Endothelial cell of umbilical vein (primary cell): ENCODE measurements at regions of chr5 and their contacts with region 1.

Region 1: DNA sequence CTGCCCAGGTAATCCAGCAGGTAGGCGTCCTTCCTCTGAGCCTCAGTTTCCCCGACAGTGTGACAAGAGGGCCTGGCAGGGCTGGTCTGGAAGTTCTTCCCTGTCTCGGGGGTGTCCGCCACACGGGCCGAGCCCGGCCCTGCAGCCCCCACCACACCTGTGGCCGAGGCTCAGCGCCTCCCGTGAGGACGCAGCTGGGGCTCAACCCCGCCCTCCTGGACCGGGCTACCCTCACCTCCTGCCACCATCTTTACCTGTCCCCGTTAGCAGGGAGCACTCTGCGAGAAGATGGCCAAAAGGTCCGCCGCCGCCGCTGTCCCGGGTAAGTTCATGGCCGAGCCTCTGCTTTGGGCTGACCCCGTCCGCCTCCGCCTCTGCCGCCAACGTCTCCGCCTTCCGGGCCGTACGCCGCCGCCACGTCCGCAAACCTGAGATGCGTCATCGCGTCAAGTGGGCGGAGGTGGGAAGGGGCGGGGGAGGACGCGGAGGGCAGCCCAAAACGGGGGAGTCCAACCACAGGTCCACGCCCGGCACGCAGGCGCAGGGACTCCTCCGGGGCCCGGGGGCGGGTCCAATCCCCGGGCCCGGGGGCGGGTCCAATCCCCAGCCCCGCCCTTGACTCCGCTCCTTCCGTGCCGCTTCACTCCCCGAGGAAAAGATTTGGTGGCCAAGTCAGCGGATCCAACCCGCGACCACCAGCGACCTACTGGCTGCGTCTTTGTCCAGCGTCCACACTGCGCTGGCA is at the start of gene LYSMD3:
- DNase-seq: peak; percentile 98
- H3K4me3 ChIP-seq: peak within 1 kb of the TSS; percentile 69 to 94 (median 88)
- H3K27ac ChIP-seq: peak within 1 kb of the TSS; percentile 88
- H3K4me1 ChIP-seq: peaks cover 16% of the 10 kb centered on the region
- H3K27me3 ChIP-seq: peaks cover 8 to 29% of the 10 kb centered on the region in 2 experiments
- CTCF ChIP-seq: no peak
- POLR2A ChIP-seq: peak; percentile 88
- total RNA-seq, gene LYSMD3: 21.3 and 22.7 TPM in 2 replicates

Region 2: DNA sequence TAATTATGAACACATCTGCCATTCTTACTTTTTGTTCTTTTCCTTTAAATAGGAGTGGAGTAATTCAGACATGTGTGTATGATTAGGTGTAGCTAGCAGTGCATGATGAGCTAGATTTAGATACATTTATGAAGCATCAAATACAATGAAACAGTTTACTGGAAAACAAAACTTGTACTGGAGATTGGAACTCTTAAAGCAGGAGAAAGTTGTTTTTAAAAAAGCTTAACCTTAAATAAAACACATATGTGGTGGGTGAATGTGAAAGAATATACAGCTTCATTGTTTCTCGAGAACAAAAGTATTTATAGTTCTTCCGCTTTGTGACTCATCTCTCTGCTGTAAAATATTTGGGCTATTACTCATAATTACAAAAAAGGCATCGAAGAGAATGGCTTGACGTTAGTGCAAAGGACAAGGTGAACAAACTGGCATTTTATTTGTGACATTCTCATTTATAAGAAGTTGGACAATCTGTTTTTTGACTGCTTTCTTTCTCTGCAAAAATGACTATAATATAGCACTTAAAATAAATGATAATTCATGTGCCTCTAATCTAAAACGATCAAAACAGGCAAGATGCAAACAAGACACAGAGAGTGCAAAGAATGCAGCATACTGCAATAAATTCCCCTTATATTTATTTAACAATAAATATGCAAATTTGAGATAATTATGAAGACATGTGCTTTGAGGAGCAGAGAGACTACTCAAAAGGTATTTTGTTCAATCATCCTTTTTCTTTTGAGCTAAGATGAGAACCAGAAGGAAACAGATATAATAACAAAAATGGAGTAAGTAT is 598.6 kb before region 1 on chr5:
- CTCF ChIA-PET with region 1: no interaction called
- POLR2A ChIA-PET with region 1: no interaction called
- dilution Hi-C with region 1: no loop called
- intact Hi-C with region 1: loop called (anchors 10 kb)
- DNase-seq: peak; percentile 88
- H3K4me3 ChIP-seq: peak overlapping the region in 1 of 3 experiments; percentile 21
- H3K27ac ChIP-seq: peak overlapping the region; percentile 97
- H3K4me1 ChIP-seq: peaks cover 29% of the 10 kb centered on the region
- H3K27me3 ChIP-seq: no peaks in the 10 kb centered on the region
- CTCF ChIP-seq: no peak
- POLR2A ChIP-seq: no peak

Region 3: DNA sequence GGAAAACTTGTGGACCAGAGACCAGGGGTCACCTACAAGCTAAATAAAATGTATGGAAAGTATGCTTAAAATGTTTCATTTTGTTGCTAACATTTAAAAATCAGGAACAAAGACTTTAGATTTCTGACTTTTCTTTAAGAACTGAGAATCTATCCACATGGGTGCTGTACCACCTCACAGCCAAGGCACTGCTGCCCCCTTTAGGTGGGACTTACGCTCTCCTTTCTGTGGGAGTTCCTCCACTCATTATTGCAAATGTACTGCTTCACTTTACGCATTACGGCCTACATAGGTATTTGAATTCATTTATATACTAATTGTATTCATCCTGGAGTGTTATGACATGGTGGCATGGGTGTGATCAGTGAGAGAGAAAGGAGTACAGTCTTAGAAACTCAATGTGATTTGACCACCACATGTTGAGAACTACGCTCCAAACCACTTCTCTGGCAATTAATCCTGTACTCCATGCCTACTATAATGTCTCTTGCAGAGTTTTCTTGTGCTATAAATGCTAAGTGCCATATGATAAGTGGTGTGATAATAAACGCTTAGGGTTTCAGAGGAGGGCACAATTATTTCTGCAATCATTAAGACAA is 95.2 kb before region 1 on chr5:
- CTCF ChIA-PET with region 1: interaction called, 75 read pairs
- POLR2A ChIA-PET with region 1: no interaction called
- dilution Hi-C with region 1: no loop called
- intact Hi-C with region 1: loop called (anchors 1 kb)
- DNase-seq: peak; percentile 41
- H3K4me3 ChIP-seq: no peak overlapping the region
- H3K27ac ChIP-seq: no peak overlapping the region
- H3K4me1 ChIP-seq: no peaks in the 10 kb centered on the region
- H3K27me3 ChIP-seq: peaks cover 8 to 9% of the 10 kb centered on the region in 2 experiments
- CTCF ChIP-seq: peak; percentile 54 to 64
- POLR2A ChIP-seq: no peak

Region 4: GRCh38 chr5:90488791-90489190 is 40.6 kb before region 1 on chr5:
- CTCF ChIA-PET with region 1: no interaction called
- POLR2A ChIA-PET with region 1: no interaction called
- dilution Hi-C with region 1: no loop called
- intact Hi-C with region 1: loop called (anchors 5 kb)
- DNase-seq: peak; percentile 38
- H3K4me3 ChIP-seq: no peak overlapping the region
- H3K27ac ChIP-seq: peak overlapping the region; percentile 27
- H3K4me1 ChIP-seq: peaks cover 2% of the 10 kb centered on the region
- H3K27me3 ChIP-seq: no peaks in the 10 kb centered on the region
- CTCF ChIP-seq: no peak
- POLR2A ChIP-seq: no peak

Region 5: DNA sequence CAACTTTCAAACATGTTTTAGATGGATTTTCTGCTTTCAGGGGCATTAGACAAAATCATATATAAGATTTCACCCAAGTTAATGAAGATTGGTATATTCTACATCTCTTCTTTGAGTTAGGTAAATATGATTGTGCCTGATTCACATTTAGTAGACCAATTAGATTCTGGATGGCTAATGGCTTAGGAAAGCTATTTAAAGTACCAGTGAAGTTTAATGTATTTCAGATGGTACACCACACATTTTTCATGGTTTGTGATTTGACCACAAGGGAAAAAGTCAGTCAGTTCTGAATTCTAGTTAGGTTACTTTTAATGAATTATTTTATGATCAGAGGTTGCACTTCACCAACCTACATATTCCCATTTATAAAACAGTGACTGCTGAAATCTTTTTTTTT is 439.0 kb after region 1 on chr5:
- CTCF ChIA-PET with region 1: no interaction called
- POLR2A ChIA-PET with region 1: no interaction called
- dilution Hi-C with region 1: no loop called
- intact Hi-C with region 1: loop called (anchors 10 kb)
- DNase-seq: no peak
- H3K4me3 ChIP-seq: no peak overlapping the region
- H3K27ac ChIP-seq: peak overlapping the region; percentile 57
- H3K4me1 ChIP-seq: peaks cover 32% of the 10 kb centered on the region
- H3K27me3 ChIP-seq: no peaks in the 10 kb centered on the region
- CTCF ChIP-seq: no peak
- POLR2A ChIP-seq: no peak